Activated B cell treated with CpG ODN at 0.5 μM for 24 hours (primary cell): ENCODE measurements at regions of chr4 and their contacts with region 1.

Region 1: GRCh38 chr4:127965062-127965802 is at the starts of genes ABHD18 and MFSD8:
- DNase-seq: peak; percentile 96
- ATAC-seq: peak; percentile 96
- H3K4me3 Mint-ChIP-seq: peak within 1 kb of the TSS; percentile 98
- H3K27ac Mint-ChIP-seq: peak within 1 kb of the TSS; percentile 96
- H3K4me1 Mint-ChIP-seq: peaks cover 34% of the 10 kb centered on the region
- H3K27me3 Mint-ChIP-seq: no peaks in the 10 kb centered on the region
- CTCF ChIP-seq: no peak
- total RNA-seq, gene ABHD18: 12.8 and 13.9 TPM in 2 replicates
- total RNA-seq, gene MFSD8: 30.8 and 31.1 TPM in 2 replicates

Region 2: GRCh38 chr4:127782274-127783025 is 182.8 kb before region 1 on chr4 and contains the start of gene HSPA4L:
- CTCF ChIA-PET with region 1: no interaction called
- POLR2A ChIA-PET with region 1: interaction called, 4 read pairs
- intact Hi-C with region 1: loop called (anchors 5 kb)
- DNase-seq: peak; percentile 44
- ATAC-seq: peak; percentile 84
- H3K4me3 Mint-ChIP-seq: peak within 1 kb of the TSS; percentile 88
- H3K27ac Mint-ChIP-seq: peak within 1 kb of the TSS; percentile 38
- H3K4me1 Mint-ChIP-seq: peaks cover 19% of the 10 kb centered on the region
- H3K27me3 Mint-ChIP-seq: peaks cover 48% of the 10 kb centered on the region
- CTCF ChIP-seq: no peak
- total RNA-seq, gene HSPA4L: 0.07 and 0.13 TPM in 2 replicates

Region 3: GRCh38 chr4:127997534-127998388 is 32.5 kb after region 1 on chr4:
- CTCF ChIA-PET with region 1: interaction called, 5 read pairs
- POLR2A ChIA-PET with region 1: interaction called, 12 read pairs
- intact Hi-C with region 1: loop called (anchors 2 kb)
- DNase-seq: no peak
- ATAC-seq: peak; percentile 92
- H3K4me3 Mint-ChIP-seq: peak overlapping the region; percentile 2
- H3K27ac Mint-ChIP-seq: peak overlapping the region; percentile 81
- H3K4me1 Mint-ChIP-seq: peaks cover 23% of the 10 kb centered on the region
- H3K27me3 Mint-ChIP-seq: no peaks in the 10 kb centered on the region
- CTCF ChIP-seq: no peak

Region 4: GRCh38 chr4:128204901-128205300 is 239.7 kb after region 1 on chr4:
- CTCF ChIA-PET with region 1: no interaction called
- POLR2A ChIA-PET with region 1: no interaction called
- intact Hi-C with region 1: no loop called
- DNase-seq: no peak
- ATAC-seq: no peak
- H3K4me3 Mint-ChIP-seq: no peak overlapping the region
- H3K27ac Mint-ChIP-seq: no peak overlapping the region
- H3K4me1 Mint-ChIP-seq: no peaks in the 10 kb centered on the region
- H3K27me3 Mint-ChIP-seq: no peaks in the 10 kb centered on the region
- CTCF ChIP-seq: no peak

Region 5: GRCh38 chr4:129093191-129093920 is 1128.1 kb after region 1 on chr4 and contains the start of gene SCLT1:
- CTCF ChIA-PET with region 1: no interaction called
- POLR2A ChIA-PET with region 1: interaction called, 12 read pairs
- intact Hi-C with region 1: loop called (anchors 1 kb)
- DNase-seq: peak; percentile 94
- ATAC-seq: peak; percentile 92
- H3K4me3 Mint-ChIP-seq: no peak within 1 kb of the TSS
- H3K27ac Mint-ChIP-seq: no peak within 1 kb of the TSS
- H3K4me1 Mint-ChIP-seq: peaks cover 45% of the 10 kb centered on the region
- H3K27me3 Mint-ChIP-seq: no peaks in the 10 kb centered on the region
- CTCF ChIP-seq: no peak
- total RNA-seq, gene SCLT1: 24.5 and 25.0 TPM in 2 replicates